ENCODE measurements at regions of chr22 and their contacts with region 1.

Region 1: DNA sequence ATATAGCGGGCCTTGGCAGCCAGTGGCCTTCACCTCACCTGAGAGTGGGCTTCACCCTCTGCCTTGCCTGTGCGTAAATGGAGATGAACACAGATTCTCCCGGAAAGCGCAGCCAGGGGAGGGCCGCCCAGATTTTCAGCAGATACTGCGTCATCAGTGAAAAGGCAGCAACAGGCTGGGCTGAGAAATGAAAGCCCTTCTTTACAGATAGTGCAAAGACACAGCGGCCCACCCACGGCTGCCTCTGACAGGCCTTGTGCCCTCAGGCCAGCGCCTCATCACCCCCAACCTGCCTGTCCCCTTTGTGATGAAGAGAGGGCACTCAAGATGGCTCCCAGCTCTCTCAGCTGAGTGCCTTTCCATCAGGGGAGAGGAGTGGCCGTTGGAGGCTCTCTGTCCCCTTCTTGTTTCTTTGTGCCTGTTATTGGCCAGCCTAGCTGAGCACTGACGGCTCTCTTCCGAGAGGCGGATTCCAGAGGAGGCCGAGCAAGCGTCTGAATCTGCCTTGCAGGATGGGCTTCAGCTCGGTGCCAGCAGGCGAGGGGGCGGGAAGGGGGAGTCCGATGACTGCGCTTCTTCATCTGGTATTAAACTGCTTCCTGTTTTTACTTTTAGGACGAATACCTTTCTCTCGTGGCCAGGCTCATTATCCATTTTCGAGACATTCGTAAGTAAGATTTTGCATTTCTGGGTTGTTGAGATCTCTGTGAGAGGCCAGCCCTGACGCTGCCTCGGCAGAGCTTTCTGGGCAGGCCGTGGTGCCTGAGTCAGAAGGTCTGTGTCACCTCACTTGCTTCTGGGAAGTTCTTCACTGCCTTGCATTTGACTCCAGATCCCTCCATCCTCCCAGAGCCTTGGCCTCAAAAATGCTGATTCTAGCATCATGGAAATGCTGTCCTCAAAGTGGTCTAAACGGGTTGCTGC is 43.7 kb downstream of the MED15 start:
- DNase-seq: no peak
- H3K4me3 ChIP-seq: peak overlapping the region in 1 of 2 donors; percentile 9
- H3K27ac ChIP-seq: peak overlapping the region; percentile 92
- H3K4me1 ChIP-seq: peaks cover 70% of the 10 kb centered on the region
- H3K27me3 ChIP-seq: no peaks in the 10 kb centered on the region
- CTCF ChIP-seq: no peak
- POLR2A ChIP-seq: no peak

Region 2: GRCh38 chr22:20507253-20508066 is 43.6 kb before region 1 on chr22 and contains the start of gene MED15:
- intact Hi-C with region 1: loop called (anchors 5 kb)
- DNase-seq: no peak
- H3K4me3 ChIP-seq: peak within 1 kb of the TSS; percentile 84 to 93
- H3K27ac ChIP-seq: peak within 1 kb of the TSS; percentile 94
- H3K4me1 ChIP-seq: peaks cover 38% of the 10 kb centered on the region
- H3K27me3 ChIP-seq: no peaks in the 10 kb centered on the region
- CTCF ChIP-seq: no peak
- POLR2A ChIP-seq: peak in 1 of 2 donors; percentile 84
- total RNA-seq, gene MED15: 72.2 TPM

Region 3: DNA sequence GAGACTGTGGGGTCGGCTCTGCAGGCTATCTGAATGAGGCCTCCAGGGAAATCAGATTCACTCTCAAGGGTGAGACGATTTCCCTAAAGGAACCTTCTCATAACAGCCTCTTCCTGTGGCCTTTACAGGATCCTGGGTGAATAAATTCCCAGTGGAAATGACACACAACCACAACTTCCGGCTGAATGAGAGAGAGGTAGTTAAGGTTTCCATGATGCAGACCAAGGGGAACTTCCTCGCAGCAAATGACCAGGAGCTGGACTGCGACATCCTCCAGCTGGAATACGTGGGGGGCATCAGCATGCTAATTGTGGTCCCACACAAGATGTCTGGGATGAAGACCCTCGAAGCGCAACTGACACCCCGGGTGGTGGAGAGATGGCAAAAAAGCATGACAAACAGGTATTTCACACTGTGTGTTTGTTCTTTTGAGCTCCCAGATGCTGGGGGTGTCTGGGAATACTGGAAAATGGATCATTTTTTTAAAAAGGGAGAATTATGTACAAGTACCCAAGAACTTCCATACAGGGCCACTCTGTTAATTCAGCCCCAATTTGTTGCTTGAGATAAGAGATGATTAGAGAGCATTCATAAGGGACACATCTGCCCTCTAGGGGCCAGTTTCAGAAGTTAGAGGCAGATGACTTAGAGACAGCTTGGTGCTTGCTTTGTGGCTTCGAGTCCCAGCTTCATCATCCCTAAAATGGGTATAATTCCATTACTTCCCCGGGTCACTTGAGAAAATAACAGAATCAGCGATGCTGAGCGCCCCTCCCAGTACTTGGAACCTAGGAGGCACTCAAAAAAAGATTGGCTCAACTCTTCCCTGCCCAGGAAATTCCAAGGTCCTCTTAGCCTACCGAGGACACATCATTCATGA is 233.0 kb after region 1 on chr22:
- intact Hi-C with region 1: no loop called
- DNase-seq: no peak
- H3K4me3 ChIP-seq: no peak overlapping the region
- H3K27ac ChIP-seq: no peak overlapping the region
- H3K4me1 ChIP-seq: peaks cover 12% of the 10 kb centered on the region
- H3K27me3 ChIP-seq: no peaks in the 10 kb centered on the region
- CTCF ChIP-seq: peak in 2 of 3 experiments; percentile 26 to 32
- POLR2A ChIP-seq: no peak